ENCODE measurements at regions of chr6 and their contacts with region 1.

Region 1: GRCh38 chr6:78961513-78961912 is 94.2 kb downstream of the IRAK1BP1 start:
- DNase-seq: no peak
- ATAC-seq: no peak
- H3K4me3 ChIP-seq: no peak overlapping the region
- H3K4me3 Mint-ChIP-seq: no peak overlapping the region
- H3K27ac ChIP-seq: no peak overlapping the region
- H3K27ac Mint-ChIP-seq: no peak overlapping the region
- H3K4me1 ChIP-seq: no peaks in the 10 kb centered on the region
- H3K4me1 Mint-ChIP-seq: no peaks in the 10 kb centered on the region
- H3K27me3 ChIP-seq: no peaks in the 10 kb centered on the region
- H3K27me3 Mint-ChIP-seq: no peaks in the 10 kb centered on the region
- CTCF ChIP-seq: no peak

Region 2: DNA sequence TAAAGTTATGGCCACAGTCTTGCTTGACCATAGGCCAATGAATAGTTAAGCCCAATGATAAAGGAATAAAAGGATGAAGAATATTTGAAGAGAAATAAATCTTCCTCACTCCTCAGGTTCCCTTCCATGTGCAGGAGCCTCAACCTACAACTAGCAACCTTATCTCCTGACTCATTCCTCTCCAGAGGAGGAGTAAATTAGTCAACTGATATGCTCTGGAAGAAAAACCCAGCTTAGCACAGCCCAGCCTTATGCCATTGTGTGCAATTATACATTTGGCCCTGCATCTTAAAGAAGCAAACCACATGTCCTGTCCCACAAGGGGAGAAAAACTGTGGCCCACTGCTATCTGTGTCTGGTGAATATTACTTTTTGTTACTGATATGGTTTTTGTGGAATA is 34.4 kb after region 1 on chr6:
- CTCF ChIA-PET with region 1: no interaction called
- POLR2A ChIA-PET with region 1: no interaction called
- intact Hi-C with region 1: loop called (anchors 5 kb)
- DNase-seq: no peak
- ATAC-seq: no peak
- H3K4me3 ChIP-seq: no peak overlapping the region
- H3K4me3 Mint-ChIP-seq: no peak overlapping the region
- H3K27ac ChIP-seq: no peak overlapping the region
- H3K27ac Mint-ChIP-seq: no peak overlapping the region
- H3K4me1 ChIP-seq: no peaks in the 10 kb centered on the region
- H3K4me1 Mint-ChIP-seq: no peaks in the 10 kb centered on the region
- H3K27me3 ChIP-seq: no peaks in the 10 kb centered on the region
- H3K27me3 Mint-ChIP-seq: no peaks in the 10 kb centered on the region
- CTCF ChIP-seq: no peak

Region 3: DNA sequence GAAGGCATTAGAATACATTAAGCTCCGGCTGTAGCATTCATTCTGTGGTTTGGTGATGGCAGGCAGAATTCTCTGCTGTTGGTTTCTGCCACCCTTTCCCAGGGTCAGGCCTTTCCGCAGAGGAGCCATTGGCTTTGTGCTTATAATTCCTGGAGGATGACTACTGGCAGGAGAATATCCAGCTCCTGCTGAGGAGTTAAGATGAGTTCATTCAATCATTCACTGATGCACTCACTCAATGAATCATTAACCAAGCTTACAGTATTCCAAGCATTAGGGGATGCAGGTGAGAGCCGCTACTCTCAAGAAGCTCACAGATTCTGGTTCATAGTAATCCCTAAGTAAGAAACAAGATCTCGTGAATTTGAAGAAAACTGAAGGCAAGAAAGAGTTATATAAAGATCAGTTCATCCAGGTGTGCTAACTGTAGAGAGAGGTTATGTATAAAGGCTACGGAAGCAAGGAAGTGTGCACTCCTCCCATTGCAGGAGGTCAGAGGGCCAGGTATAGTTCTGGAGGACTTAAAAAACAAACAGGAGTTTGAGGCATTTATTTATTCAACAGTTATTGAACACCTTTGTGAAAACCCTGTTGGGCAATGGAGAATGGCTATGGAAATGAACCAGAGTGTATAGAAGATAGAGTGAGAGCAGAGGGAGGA is 197.5 kb after region 1 on chr6:
- CTCF ChIA-PET with region 1: no interaction called
- POLR2A ChIA-PET with region 1: no interaction called
- intact Hi-C with region 1: no loop called
- DNase-seq: no peak
- ATAC-seq: no peak
- H3K4me3 ChIP-seq: no peak overlapping the region
- H3K4me3 Mint-ChIP-seq: no peak overlapping the region
- H3K27ac ChIP-seq: no peak overlapping the region
- H3K27ac Mint-ChIP-seq: no peak overlapping the region
- H3K4me1 ChIP-seq: no peaks in the 10 kb centered on the region
- H3K4me1 Mint-ChIP-seq: no peaks in the 10 kb centered on the region
- H3K27me3 ChIP-seq: no peaks in the 10 kb centered on the region
- H3K27me3 Mint-ChIP-seq: peaks cover 11% of the 10 kb centered on the region
- CTCF ChIP-seq: no peak

Measured in B cell (primary cell).